GM12878 (cell line): ENCODE measurements at regions of chr15 and their contacts with region 1.

Region 1: DNA sequence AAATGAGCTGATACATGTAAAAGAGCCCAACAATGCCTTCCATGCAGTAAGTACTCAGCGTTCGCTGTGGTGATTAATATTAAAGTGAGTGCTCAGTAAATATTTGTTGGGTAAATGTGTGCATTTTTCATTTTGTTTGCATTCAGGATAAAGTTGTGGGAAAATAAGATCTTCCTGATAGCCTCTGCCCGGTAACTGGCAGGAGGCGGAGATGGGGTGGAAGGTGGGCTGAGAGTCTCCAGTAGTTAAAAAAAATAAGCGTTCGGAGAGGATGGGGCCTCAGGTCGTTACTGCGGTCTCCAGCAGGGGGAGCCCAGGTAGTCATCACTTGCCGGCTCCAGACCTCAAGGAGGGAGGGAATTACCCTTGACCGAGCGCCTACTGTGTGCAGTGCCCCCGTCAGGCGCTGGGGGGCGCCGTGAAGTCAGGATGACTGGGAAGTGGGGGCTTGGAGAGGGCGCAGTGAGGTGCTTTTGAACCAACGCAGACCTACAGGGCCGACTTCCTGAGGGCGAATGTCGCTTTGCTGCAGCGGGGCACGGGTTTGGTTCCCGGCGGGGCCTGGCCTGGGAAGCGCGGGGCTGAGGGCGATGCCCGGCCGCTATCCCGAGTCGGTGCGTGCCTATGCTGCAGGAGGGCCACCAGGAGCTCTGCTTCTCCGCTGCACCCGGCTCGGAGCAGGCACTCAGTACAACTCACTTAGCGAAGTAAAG is 80.1 kb downstream of the RHCG start:
- DNase-seq: no peak
- ATAC-seq: peak; percentile 90
- H3K4me3 ChIP-seq: no peak overlapping the region
- H3K27ac ChIP-seq: no peak overlapping the region
- H3K4me1 ChIP-seq: no peaks in the 10 kb centered on the region
- H3K27me3 ChIP-seq: peaks cover 6 to 8% of the 10 kb centered on the region in 2 experiments; a peak in 3 of 4 replicates
- CTCF ChIP-seq: peak; percentile 93 to 99 (median 97)
- EP300 ChIP-seq: no peak
- POLR2A ChIP-seq: no peak
- RAD21 ChIP-seq: peak; percentile 55

Region 2: DNA sequence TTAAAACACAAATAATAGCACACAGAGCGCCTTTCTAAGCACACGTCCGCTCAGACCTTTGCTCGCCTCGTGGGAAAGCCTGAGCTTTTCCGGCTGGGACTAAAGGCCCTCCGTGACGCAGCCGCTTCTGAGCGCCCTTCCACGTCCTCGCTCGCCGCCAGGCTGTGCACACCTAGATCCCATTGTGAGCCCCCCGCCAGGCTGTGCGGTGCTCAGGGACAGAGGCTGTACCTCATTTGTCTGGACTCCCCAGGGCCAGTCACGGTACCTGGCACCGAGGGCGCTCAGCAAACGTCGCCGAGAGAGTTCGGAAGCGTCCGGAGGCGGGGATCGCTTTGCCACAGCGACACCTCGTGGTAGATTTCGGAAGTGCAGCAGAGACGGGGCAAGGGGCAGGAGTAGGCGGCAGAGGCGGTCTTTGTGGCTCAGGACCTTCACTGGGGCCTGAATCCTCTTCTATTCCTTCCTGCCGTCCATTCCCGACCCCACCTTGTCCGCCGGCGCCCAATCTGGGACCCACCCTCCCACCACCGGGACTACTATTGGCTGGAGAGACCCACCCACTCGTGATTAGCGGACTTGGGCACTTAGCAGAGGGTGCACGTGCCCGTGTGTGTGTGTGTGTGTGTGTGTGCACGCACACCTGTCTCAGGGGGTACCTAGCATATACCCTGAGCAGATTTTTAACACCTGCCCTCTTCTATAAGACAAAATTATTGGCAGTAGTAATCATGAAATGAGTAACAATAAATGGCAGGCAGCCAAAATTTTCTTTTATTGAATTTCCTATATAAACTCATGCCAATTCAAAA is 14.4 kb after region 1 on chr15:
- CTCF ChIA-PET with region 1: interaction called, 73 read pairs
- POLR2A ChIA-PET with region 1: interaction called, 6 read pairs
- RAD21 ChIA-PET with region 1: interaction called, 5 read pairs
- SMC1A ChIA-PET with region 1: interaction called, 6 read pairs
- in situ Hi-C with region 1: no loop called
- intact Hi-C with region 1: no loop called
- DNase-seq: peak; percentile 31
- ATAC-seq: peak; percentile 99
- H3K4me3 ChIP-seq: peak overlapping the region; percentile 69
- H3K27ac ChIP-seq: no peak overlapping the region
- H3K4me1 ChIP-seq: peaks cover 2% of the 10 kb centered on the region; the same call in 1 of the 2 replicates
- H3K27me3 ChIP-seq: no peaks in the 10 kb centered on the region
- CTCF ChIP-seq: peak; percentile 93 to 94 (median 94); a peak in 5 of 6 replicates
- EP300 ChIP-seq: no peak
- POLR2A ChIP-seq: peak; percentile 42; the same call in 1 of the 2 replicates
- RAD21 ChIP-seq: peak; percentile 73

Region 3: GRCh38 chr15:89482139-89482538 is 65.8 kb after region 1 on chr15:
- CTCF ChIA-PET with region 1: no interaction called
- POLR2A ChIA-PET with region 1: no interaction called
- RAD21 ChIA-PET with region 1: no interaction called
- SMC1A ChIA-PET with region 1: no interaction called
- in situ Hi-C with region 1: no loop called
- intact Hi-C with region 1: no loop called
- DNase-seq: no peak
- ATAC-seq: no peak
- H3K4me3 ChIP-seq: no peak overlapping the region
- H3K27ac ChIP-seq: no peak overlapping the region
- H3K4me1 ChIP-seq: no peaks in the 10 kb centered on the region
- H3K27me3 ChIP-seq: no peaks in the 10 kb centered on the region; a peak in 1 of 4 replicates
- CTCF ChIP-seq: no peak
- EP300 ChIP-seq: no peak
- POLR2A ChIP-seq: no peak
- RAD21 ChIP-seq: no peak

Region 4: GRCh38 chr15:90412356-90413194 is 996.3 kb after region 1 on chr15:
- CTCF ChIA-PET with region 1: no interaction called
- POLR2A ChIA-PET with region 1: no interaction called
- RAD21 ChIA-PET with region 1: no interaction called
- SMC1A ChIA-PET with region 1: no interaction called
- in situ Hi-C with region 1: no loop called
- intact Hi-C with region 1: no loop called
- DNase-seq: peak; percentile 72
- ATAC-seq: peak; percentile 95
- H3K4me3 ChIP-seq: peak overlapping the region; percentile 8; the same call in 1 of the 2 replicates
- H3K27ac ChIP-seq: peak overlapping the region; percentile 45
- H3K4me1 ChIP-seq: peaks cover 23% of the 10 kb centered on the region
- H3K27me3 ChIP-seq: no peaks in the 10 kb centered on the region
- CTCF ChIP-seq: no peak
- EP300 ChIP-seq: no peak
- POLR2A ChIP-seq: no peak
- RAD21 ChIP-seq: no peak